Thyroid gland (tissue), 4 donors: ENCODE measurements at regions of chr22 and their contacts with region 1.

Region 1: GRCh38 chr22:19909350-19910179 is 32.0 kb upstream of the COMT start:
- DNase-seq: peak; percentile 87 to 89
- H3K4me3 ChIP-seq: no peak overlapping the region
- H3K27ac ChIP-seq: no peak overlapping the region
- H3K4me1 ChIP-seq: peaks cover 12 to 15% of the 10 kb centered on the region in 2 donors
- H3K27me3 ChIP-seq: no peaks in the 10 kb centered on the region
- CTCF ChIP-seq: peak; percentile 64 to 95 (median 86)
- POLR2A ChIP-seq: no peak

Region 2: GRCh38 chr22:19730655-19731360 is 178.8 kb before region 1 on chr22:
- intact Hi-C with region 1: loop called (anchors 2 kb)
- DNase-seq: peak; percentile 77 to 80
- H3K4me3 ChIP-seq: peak overlapping the region in 1 of 3 donors; percentile 24
- H3K27ac ChIP-seq: no peak overlapping the region
- H3K4me1 ChIP-seq: peaks cover 0 to 10% of the 10 kb centered on the region in 2 donors
- H3K27me3 ChIP-seq: no peaks in the 10 kb centered on the region
- CTCF ChIP-seq: peak; percentile 83 to 98 (median 96)
- POLR2A ChIP-seq: no peak

Region 3: GRCh38 chr22:19959043-19959586 is 49.5 kb after region 1 on chr22:
- intact Hi-C with region 1: loop called (anchors 5 kb)
- DNase-seq: peak; percentile 96
- H3K4me3 ChIP-seq: peak overlapping the region in 2 of 3 donors; percentile 16 to 17
- H3K27ac ChIP-seq: peak overlapping the region; percentile 66 to 76 (median 75)
- H3K4me1 ChIP-seq: peaks cover 31 to 33% of the 10 kb centered on the region in 2 donors
- H3K27me3 ChIP-seq: no peaks in the 10 kb centered on the region
- CTCF ChIP-seq: no peak
- POLR2A ChIP-seq: peak in 1 of 2 donors; percentile 78